Right ventricle myocardium inferior (tissue), 1 donor: ENCODE measurements at regions of chr12 and their contacts with region 1.

Region 1: DNA sequence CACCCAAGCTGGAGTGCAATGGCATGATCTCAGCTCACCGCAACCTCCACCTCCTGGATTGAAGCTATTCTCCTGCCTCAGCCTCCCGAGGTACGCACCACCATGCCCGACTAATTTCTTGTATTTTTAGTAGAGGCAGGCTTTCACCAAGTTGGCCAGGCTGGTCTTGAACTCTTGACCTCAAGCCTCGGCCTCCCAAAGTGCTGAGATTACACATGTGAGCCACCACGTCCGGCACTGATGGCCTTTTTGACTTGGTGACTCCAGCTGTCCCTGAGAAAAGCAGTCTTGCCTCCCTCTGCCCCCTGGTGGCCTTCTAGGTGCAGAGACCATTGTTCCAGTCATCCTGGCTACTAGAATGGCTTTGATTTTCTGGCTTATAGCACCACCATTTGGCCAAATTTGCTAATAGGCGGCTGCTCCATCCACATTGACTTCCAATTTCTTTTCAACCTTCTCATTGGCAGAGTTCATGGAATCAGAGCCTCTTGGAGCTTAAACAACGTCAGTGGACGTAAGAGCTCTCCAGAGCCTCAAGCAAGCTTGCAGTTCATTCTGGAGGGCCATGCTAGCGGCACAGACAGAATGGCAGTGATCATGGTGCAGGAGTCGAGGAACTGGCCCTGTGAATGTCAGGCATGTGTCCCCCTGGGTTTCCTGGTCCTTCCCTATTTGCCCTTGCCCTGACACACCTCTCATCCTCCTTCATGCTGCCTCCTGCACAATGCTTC is 25.4 kb upstream of the EIF4B start:
- DNase-seq: peak; percentile 86
- ATAC-seq: peak; percentile 93

Region 2: DNA sequence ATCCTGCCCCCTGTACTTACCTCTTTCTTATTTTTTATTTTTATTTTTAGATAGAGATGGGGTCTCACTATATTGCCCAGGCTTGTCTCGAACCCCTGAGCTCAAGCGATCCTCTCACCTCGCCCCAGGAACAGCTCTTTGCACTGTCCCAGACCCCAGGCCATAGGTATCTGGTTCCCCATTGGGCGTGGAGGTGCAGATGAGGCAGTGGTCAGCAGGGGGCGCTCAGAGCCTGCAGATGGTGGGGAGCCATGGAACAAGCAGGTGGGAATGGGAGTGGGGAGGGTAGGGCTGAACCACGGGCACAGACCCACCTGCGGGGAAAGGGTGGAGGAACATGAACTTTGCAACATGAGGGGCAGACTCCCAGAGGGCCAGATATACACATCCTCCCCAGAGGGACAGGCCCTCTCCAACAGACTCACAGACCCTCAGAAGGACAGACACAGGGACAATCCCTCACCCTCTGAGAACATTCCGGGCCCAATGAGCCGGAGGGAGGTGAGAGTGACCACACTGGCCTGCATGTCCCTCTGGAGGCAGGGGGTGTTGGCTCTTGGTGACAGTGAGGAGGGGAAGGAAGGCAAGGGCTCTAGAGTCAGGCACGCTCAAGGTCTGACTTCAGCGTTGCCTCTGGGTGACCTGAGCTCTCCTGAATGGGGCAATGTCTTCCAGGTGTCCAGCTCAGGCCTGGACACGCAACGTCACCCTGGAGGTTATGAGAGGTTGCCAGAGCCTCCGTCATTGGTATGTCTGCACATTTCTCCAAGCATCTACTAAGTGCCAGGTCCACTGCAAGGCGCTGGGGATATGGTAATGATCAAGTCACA is 823.9 kb before region 1 on chr12:
- intact Hi-C with region 1: loop called (anchors 10 kb)
- DNase-seq: peak; percentile 82
- ATAC-seq: peak; percentile 62

Region 3: DNA sequence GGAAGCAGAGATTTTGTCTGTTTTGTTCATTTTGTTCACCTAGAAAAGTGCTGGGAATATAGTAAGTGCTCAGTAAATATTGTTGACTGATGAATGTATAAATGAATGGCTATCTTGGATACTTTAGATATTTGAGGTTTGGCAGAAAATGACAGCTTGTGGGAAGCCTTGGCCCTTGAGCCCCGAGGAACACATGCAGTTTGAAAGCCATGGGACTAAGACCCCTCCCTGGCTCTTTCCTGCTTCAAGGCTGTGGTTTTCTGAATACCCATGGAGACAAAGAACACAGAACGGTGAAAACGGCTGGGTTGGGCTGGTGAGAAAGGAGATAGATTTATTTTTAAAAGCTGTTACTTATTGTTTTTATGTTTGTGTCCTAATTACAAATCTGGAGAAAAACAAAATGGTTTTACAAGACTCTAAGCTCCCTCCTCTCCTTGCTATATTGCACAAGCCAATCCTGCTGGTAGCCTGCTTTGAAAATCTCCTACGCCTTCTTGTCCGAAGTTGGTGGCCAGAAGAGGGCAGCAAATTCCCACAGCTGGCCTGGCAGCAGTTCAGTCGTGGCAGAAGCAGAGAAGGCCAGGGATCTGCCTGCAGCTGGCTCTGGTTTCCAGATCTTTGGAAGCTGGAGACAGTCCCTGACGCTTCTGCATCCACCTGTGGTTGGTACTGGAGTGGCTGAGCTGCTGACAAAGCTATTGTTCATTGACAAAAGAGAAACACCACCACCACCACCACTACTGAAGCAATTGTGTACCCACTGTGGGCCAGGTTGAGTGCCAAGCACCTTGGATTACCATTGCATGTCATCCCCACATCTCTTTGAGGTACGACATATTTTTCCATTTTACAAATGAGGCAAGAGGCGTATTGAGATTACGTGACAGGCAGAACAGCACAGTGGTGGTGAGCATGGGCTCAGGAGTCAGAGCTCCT is 608.4 kb before region 1 on chr12:
- intact Hi-C with region 1: loop called (anchors 10 kb)
- DNase-seq: no peak
- ATAC-seq: peak; percentile 79

Region 4: DNA sequence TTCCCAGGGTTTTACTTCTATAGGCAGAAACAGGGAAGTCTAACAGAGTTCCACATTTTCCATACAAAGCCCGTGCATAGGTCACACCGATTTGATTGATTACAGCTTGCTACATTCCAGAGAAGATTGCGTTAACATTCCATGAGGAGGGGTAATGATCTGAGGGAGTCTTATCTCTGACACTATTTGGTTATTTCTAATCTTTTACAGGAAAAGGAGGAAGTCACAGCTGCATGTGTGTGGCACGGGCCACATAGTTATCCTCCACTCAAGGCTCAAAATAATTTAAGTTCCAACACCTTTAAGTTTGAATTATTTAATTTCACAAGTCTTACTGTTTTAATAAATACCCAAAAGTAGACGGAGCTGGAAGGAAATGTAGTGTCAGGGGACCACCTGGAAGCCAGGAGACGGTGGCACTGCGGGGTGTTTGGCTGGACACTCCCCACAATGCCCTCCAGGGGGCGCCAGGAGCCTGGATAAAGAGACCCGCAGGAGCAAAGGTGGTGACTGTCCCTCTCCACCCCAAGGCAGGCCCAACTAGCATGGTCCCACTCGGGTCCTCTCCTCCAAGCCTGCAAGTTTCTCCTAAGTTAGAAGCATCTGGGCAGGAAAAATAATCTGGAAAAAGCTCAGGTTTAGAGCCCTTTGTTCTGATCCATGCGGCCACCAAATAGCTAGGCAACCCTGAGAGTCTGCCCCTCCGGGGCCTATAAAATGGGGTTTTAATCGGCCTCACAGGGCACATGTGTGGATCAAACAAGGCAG is 96.1 kb before region 1 on chr12:
- intact Hi-C with region 1: loop called (anchors 1 kb)
- DNase-seq: peak; percentile 88
- ATAC-seq: peak; percentile 74

Region 5: DNA sequence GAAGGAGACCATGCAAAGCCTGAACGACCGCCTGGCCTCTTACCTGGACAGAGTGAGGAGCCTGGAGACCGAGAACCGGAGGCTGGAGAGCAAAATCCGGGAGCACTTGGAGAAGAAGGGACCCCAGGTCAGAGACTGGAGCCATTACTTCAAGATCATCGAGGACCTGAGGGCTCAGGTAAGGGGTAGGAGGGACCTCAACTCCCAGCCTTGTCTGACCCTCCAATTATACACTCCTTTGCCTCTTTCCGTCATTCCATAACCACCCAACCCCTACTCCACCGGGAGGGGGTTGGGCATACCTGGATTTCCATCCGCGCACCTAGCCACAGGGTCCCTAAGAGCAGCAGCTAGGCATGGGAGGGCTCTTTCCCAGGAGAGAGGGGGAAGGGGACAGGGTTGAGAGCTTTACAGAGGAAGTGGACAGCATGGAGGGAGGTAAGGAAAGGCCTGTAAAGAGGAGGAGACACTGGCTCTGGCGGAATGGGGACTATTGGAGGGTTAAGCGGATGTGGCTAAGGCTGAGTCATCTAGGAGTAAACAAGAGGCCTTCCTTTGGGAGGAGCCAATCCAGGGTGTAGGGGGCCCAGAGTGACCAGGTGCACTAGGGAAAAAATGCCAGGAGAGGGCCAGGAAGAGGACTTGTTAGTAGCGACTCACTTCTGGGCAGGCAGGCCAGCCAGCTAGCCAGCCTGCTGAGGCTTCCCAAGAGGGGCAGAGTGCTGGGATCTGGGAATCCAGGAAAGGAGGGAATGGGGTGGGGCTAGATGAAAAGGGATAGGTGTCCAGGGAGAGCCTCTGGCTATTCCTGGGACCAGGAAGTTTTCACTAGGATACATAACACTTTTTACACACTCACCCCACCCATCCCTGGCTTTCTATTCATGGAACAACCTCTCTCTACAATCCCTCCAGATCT is 31.2 kb before region 1 on chr12:
- intact Hi-C with region 1: no loop called
- DNase-seq: no peak
- ATAC-seq: peak; percentile 45

Region 6: DNA sequence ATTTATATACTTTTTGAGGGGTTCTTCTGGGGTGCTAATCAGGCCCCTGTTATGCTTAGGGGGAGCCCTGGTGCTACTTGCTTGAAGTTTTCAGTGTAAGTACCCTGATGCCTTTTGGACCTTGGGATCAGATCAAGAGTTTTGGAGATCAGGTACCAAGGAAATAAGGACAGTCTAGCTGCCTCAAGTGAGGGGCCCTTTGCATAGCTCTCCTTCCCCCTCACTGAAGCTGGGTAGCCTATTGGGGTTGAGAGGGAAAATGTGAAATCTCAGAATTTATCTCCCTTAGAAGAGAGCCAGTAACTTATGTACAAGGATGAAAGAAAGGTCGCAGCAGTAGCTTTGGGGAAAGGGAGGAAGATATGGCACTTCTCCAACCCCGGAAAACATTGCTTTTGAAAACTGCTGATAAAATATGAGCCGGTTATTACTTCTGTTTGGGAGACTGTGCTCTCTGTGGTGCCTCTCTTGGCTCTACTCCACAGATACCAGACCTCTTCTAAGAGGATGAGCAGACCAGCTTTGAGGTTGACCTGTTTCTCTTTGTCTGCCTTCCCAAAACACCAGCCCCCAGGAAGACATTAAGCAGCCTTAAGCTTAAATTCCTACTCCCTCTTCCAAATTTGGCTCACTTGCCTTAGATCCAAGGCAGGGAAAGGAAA is 434.0 kb after region 1 on chr12:
- intact Hi-C with region 1: no loop called
- DNase-seq: no peak
- ATAC-seq: no peak